Posterior vena cava (tissue), 2 donors: ENCODE measurements at regions of chr20 and their contacts with region 1.

Region 1: GRCh38 chr20:157154-157553 is at the start of gene DEFB127:
- DNase-seq: no peak
- total RNA-seq, gene DEFB127: not detected

Region 2: DNA sequence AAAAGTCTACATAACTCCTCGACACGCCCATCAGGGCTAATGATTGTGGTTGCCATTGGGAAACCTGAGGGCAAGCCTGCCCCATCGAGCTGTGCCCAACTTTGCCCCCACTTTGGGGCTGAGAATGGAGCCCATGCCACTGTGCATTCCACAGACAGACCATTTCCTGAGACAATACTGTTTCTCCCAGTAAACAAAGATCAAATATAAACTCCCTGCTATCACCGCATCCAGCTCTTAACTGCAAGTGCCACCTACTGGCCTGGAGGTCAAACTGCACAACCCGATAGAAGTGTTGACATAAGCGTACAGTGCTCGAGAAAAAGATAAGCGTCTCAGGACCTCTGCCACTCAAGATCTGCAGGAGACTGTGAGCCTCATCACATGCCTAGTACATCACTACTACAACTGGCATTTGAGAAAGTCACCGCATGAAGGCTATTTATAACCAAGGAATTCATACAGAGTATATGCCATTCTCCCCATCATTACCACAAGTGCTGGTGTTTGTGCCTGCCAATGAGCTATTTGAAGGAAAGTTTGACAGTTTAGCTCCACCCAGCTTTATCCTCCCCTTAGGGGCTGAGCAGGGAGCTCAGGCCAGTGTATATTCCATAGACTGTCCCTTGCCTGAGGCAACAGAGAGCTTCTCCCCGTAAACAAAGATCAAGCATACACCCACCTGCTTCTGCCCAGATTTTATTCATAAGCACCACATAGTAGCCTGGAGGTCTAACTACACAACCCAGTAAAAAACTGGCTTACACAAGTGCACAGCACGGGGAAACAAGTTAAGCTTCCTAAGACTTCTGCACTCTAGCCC is 19.3 kb before region 1 on chr20:
- intact Hi-C with region 1: no loop called
- DNase-seq: no peak

Region 3: GRCh38 chr20:1405801-1406200 is 1248.6 kb after region 1 on chr20:
- intact Hi-C with region 1: loop called in 1 of 2 experiments (anchors 5 kb)
- DNase-seq: no peak